Activated CD4-positive, alpha-beta memory T cell treated with anti-CD3 and anti-CD28 coated beads for 36 hours (primary cell): ENCODE measurements at regions of chr7 and their contacts with region 1.

Region 1: DNA sequence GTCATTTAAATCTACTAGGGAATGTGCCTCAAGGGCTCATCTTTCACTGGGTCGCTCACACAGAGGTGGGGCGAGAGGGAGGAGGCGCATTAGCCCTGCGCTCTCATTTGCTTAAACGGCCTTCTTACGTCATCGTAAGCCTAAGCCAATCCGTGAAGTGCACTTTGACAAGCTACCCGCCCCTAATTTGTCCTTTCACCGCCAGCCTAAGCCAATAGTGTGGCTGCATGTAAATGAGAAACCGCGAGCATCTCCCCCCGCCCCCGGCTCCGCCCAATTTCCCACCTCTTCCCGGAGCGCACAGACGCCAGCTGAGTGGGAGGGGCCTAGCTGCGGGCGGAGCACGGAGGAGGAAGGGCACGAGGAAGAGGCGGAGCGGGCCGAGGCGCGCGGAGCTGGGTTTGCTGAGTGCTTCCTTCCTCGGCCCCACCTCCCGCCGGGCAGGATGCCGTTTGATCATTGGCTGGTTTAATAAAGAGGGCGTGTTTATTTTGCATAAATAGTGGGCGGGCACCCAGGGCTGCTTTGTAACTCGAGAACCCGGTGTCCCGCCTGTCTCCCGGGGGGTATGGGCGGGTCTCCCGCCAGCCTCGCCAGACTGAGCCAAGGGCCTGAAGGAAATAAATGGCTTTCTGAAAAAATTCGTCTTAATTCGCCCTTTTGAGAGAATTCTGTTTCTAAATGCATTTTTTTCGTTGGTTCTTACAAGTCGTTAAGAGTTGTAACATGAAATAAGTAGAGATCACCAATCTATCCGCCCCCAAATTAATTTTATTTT is 289.5 kb upstream of the NFE2L3 start:
- DNase-seq: peak; percentile 98
- H3K4me3 Mint-ChIP-seq: peak overlapping the region; percentile 65
- H3K27ac Mint-ChIP-seq: peak overlapping the region; percentile 60
- H3K4me1 Mint-ChIP-seq: peaks cover 22% of the 10 kb centered on the region
- H3K27me3 Mint-ChIP-seq: peaks cover 69% of the 10 kb centered on the region

Region 2: DNA sequence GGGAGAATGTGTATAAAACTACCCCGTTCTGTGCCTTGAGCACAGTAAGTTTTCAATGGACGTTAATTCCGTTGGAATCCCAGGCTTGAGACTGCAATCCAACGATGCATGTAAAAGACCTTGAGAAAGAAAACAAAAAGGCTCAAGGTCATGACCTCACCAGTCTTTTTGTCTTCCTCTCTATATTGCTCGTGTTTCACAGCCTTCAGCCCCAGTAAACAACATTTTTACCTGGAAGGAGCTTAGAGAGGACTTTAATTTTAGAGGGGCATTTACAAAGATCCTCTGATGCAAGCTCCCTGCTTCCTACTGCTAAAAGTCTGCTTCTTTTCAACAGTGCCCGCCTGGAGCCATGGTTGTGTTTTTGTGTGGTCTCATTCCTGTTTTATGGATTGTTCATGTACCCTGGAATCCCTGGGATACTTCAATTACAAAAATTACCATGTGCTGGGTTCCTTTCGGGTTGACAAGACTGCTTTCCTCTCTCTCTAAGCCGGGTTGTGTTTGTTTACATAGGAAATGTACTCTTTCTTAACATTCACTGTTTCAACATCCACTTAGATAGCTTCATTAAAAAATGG is 30.5 kb before region 1 on chr7:
- CTCF ChIA-PET with region 1: no interaction called
- POLR2A ChIA-PET with region 1: no interaction called
- intact Hi-C with region 1: no loop called
- DNase-seq: no peak
- H3K4me3 Mint-ChIP-seq: no peak overlapping the region
- H3K27ac Mint-ChIP-seq: no peak overlapping the region
- H3K4me1 Mint-ChIP-seq: no peaks in the 10 kb centered on the region
- H3K27me3 Mint-ChIP-seq: peaks cover 3% of the 10 kb centered on the region

Region 3: GRCh38 chr7:25851332-25852210 is 10.9 kb before region 1 on chr7:
- CTCF ChIA-PET with region 1: interaction called, 9 read pairs
- POLR2A ChIA-PET with region 1: no interaction called
- intact Hi-C with region 1: loop called (anchors 1 kb)
- DNase-seq: peak; percentile 78
- H3K4me3 Mint-ChIP-seq: peak overlapping the region; percentile 65
- H3K27ac Mint-ChIP-seq: no peak overlapping the region
- H3K4me1 Mint-ChIP-seq: peaks cover 11% of the 10 kb centered on the region
- H3K27me3 Mint-ChIP-seq: peaks cover 51% of the 10 kb centered on the region

Region 4: GRCh38 chr7:26151953-26152781 is 289.7 kb after region 1 on chr7 and contains the start of gene NFE2L3:
- CTCF ChIA-PET with region 1: no interaction called
- POLR2A ChIA-PET with region 1: interaction called, 3 read pairs
- intact Hi-C with region 1: loop called (anchors 2 kb)
- DNase-seq: peak; percentile 90
- H3K4me3 Mint-ChIP-seq: peak within 1 kb of the TSS; percentile 98
- H3K27ac Mint-ChIP-seq: peak within 1 kb of the TSS; percentile 92
- H3K4me1 Mint-ChIP-seq: peaks cover 51% of the 10 kb centered on the region
- H3K27me3 Mint-ChIP-seq: no peaks in the 10 kb centered on the region
- total RNA-seq, gene NFE2L3: 27.3 to 30.3 TPM

Region 5: DNA sequence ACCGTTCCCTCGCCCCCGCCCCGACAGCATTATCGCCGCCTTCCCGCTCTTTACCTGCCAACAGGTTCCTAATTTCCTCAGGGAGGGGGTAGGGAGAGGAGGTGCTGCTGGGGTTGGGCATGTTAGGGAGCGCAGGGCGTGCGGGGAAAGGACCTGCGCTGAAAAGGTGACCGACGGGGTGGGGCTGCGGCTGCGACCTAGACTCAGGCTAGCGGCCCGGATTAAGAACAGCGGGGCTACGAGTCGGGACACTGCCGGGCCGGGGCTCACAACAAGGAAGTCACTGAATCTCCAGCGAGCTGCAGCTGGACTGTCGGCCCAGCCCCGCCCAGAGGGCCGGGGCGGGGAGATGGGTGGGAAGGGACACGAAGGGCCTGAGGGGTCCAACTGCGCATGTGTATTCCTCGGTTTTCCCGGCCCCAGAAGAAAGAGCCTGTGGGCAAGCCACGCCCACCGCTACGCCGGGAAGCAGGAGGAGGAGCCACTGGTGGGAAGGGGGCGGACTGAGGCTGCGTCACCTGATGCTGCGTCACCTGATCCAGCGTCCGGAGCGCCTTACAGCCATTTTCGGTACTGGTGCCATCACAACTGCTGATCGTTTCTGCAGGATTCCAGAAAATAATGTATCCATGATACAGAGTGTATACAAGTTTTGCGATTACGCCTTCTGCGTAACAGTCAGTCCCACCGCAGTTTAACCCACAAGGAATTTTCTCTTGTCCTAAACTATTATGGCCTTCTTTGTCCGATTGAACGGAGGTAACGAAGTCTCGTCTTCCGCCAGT is 1002.1 kb after region 1 on chr7 and contains the start of gene SKAP2:
- CTCF ChIA-PET with region 1: no interaction called
- POLR2A ChIA-PET with region 1: no interaction called
- intact Hi-C with region 1: loop called (anchors 1 kb)
- DNase-seq: peak; percentile 94
- H3K4me3 Mint-ChIP-seq: peak within 1 kb of the TSS; percentile 95
- H3K27ac Mint-ChIP-seq: peak within 1 kb of the TSS; percentile 74
- H3K4me1 Mint-ChIP-seq: peaks cover 18% of the 10 kb centered on the region
- H3K27me3 Mint-ChIP-seq: peaks cover 27% of the 10 kb centered on the region
- total RNA-seq, gene SKAP2: 11.2 to 11.9 TPM

Region 6: DNA sequence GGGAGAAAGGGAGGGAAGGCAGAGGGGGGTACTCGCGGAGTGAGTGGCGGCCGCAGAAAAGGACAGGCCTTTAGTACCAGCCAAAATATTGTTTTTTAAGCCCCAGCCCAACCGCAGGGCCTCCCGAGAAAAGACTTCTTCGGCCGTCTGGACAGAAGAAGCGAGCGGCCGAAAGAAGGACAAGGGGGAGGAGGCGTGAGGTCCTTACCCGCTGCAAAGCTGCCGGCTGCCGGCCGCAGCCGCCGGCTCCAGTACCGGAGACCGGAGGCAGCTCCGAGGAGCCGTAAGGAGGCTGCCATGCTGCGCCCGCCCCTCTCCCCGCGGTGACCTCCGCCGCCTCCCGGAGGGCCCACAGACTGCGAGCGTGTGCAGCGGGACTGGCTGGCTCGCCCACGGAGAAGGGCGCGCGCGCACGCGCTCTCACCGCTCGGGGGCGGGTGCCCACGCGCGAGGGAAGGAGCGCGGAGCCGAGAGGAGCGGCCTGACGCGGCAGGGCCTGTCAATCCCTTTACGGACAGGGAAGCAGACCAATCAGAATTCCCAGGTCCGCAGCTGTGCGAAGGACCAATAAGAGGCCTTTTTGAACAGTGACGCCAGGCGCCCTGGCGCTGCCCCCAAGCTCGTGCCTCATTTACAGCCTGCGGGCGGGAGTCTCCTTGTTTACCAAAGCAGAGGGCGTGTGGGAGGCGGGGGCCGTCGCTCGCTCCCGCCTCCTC is 1800.2 kb after region 1 on chr7 and contains the start of gene HIBADH:
- CTCF ChIA-PET with region 1: no interaction called
- POLR2A ChIA-PET with region 1: no interaction called
- intact Hi-C with region 1: loop called (anchors 2 kb)
- DNase-seq: peak; percentile 96
- H3K4me3 Mint-ChIP-seq: peak within 1 kb of the TSS; percentile 76
- H3K27ac Mint-ChIP-seq: peak within 1 kb of the TSS; percentile 76
- H3K4me1 Mint-ChIP-seq: peaks cover 14% of the 10 kb centered on the region
- H3K27me3 Mint-ChIP-seq: no peaks in the 10 kb centered on the region
- total RNA-seq, gene HIBADH: 21.9 to 22.6 TPM